ENCODE measurements at regions of chr5 and their contacts with region 1.

Region 1: GRCh38 chr5:176810084-176810597 is at the start of gene UNC5A:
- DNase-seq: peak; percentile 16
- H3K4me3 ChIP-seq: peak within 1 kb of the TSS in 2 of 3 experiments; percentile 18 to 22
- H3K27ac ChIP-seq: no peak within 1 kb of the TSS
- H3K4me1 ChIP-seq: peaks cover 3% of the 10 kb centered on the region
- H3K27me3 ChIP-seq: peaks cover 18 to 25% of the 10 kb centered on the region in 2 experiments
- CTCF ChIP-seq: no peak
- POLR2A ChIP-seq: no peak
- total RNA-seq, gene UNC5A: 0.22 and 0.51 TPM in 2 replicates

Region 2: DNA sequence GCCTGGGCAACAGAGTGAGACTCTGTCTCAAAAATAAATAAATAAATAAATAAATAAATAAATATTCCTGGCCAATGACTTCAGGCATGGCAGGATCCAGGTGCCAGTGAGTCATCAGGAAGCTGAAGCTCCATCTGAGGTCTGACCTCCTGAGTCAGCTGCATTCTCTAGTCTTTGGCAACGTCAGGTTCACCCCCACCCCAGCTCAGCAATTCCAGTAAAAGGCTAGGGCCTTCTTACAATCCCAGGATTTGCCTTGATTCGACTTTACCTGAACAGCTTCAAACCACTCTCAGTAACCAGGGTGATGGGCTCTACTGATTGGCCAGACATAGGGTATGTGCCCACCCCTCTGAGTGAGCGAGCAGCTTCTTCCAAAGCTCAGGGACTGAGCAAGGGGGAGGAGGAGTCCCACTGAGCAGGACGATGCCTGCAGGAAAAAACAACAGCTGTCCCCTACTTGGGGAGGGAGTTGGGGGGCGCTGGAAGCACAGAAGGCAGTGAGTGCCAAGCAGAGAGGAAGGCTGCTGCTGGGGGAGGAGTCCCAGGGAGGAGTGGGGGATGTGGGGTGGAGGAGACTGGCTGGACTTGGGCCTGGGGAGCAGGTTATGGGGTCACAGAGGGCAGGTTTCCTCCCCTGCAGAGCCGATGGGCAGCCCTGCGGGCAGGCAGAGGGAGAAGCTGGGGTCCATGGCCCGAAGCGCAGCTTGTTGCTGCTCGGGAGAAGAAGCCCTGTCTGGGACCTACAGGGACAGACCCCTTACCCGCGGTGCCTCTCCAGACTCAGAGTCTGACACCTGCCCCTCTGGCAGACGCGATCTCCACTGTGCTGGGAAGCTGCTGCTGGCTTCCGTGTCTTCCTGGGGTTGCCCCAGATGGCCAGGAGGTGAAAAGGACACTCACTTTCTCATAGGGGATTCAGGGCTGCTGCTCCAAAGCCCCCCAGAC is 25.6 kb before region 1 on chr5:
- CTCF ChIA-PET with region 1: interaction called, 4 read pairs
- POLR2A ChIA-PET with region 1: no interaction called
- dilution Hi-C with region 1: no loop called
- intact Hi-C with region 1: loop called (anchors 2 kb)
- DNase-seq: peak; percentile 74
- H3K4me3 ChIP-seq: no peak overlapping the region
- H3K27ac ChIP-seq: peak overlapping the region; percentile 48
- H3K4me1 ChIP-seq: peaks cover 15% of the 10 kb centered on the region
- H3K27me3 ChIP-seq: peaks cover 10 to 11% of the 10 kb centered on the region in 2 experiments
- CTCF ChIP-seq: no peak
- POLR2A ChIP-seq: no peak

Region 3: GRCh38 chr5:176794509-176795151 is 15.5 kb before region 1 on chr5:
- CTCF ChIA-PET with region 1: no interaction called
- POLR2A ChIA-PET with region 1: no interaction called
- dilution Hi-C with region 1: no loop called
- intact Hi-C with region 1: no loop called
- DNase-seq: no peak
- H3K4me3 ChIP-seq: no peak overlapping the region
- H3K27ac ChIP-seq: no peak overlapping the region
- H3K4me1 ChIP-seq: no peaks in the 10 kb centered on the region
- H3K27me3 ChIP-seq: peaks cover 0 to 2% of the 10 kb centered on the region in 2 experiments
- CTCF ChIP-seq: no peak
- POLR2A ChIP-seq: no peak

Region 4: DNA sequence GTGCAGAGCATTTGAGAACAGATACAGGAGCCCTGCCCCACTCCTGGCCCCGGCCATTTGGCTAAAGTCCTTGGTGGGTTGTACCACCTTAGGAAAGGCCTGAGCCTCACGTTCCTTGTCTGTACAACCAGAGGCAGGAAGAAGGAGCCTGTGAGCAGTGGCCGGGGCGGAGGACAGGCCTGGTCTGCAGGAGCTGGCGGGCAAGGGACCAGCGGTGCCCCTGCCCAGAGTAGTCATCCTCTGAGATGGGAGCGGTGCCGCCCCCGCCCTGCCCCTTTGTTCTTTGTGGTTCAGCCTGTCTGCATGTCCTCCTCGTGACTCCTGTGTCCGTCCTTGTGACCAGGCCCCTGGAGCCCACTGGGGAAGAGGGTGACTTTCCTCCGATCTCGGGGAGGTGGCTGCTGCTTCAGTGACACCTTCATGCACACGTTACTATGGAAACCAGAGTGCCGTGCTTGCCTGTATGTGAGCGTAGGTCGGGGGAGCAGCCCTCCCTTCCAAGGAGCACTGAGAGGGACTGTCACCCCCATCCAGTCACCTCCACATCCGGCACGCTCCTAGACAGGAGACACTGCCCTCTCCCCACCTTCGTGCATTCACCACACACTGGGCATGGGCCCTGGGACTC is 43.1 kb after region 1 on chr5:
- CTCF ChIA-PET with region 1: no interaction called
- POLR2A ChIA-PET with region 1: no interaction called
- dilution Hi-C with region 1: no loop called
- intact Hi-C with region 1: no loop called
- DNase-seq: no peak
- H3K4me3 ChIP-seq: no peak overlapping the region
- H3K27ac ChIP-seq: no peak overlapping the region
- H3K4me1 ChIP-seq: no peaks in the 10 kb centered on the region
- H3K27me3 ChIP-seq: no peaks in the 10 kb centered on the region
- CTCF ChIP-seq: no peak
- POLR2A ChIP-seq: no peak

Region 5: GRCh38 chr5:176959051-176959450 is 148.9 kb after region 1 on chr5:
- CTCF ChIA-PET with region 1: no interaction called
- POLR2A ChIA-PET with region 1: no interaction called
- dilution Hi-C with region 1: no loop called
- intact Hi-C with region 1: loop called (anchors 2 kb)
- DNase-seq: peak; percentile 47
- H3K4me3 ChIP-seq: no peak overlapping the region
- H3K27ac ChIP-seq: no peak overlapping the region
- H3K4me1 ChIP-seq: peaks cover 8% of the 10 kb centered on the region
- H3K27me3 ChIP-seq: no peaks in the 10 kb centered on the region
- CTCF ChIP-seq: peak; percentile 23 to 26
- POLR2A ChIP-seq: no peak

Measured in endothelial cell of umbilical vein (primary cell).